Esophagus muscularis mucosa (tissue), 4 donors: ENCODE measurements at regions of chr14 and their contacts with region 1.

Region 1: GRCh38 chr14:77760381-77761246 is at the start of gene SNW1:
- DNase-seq: peak; percentile 97
- H3K4me3 ChIP-seq: peak within 1 kb of the TSS; percentile 84 to 97 (median 92)
- H3K27ac ChIP-seq: peak within 1 kb of the TSS; percentile 89 to 96 (median 94)
- H3K4me1 ChIP-seq: peaks cover 23 to 54% (median 48%) of the 10 kb centered on the region in 4 donors
- H3K27me3 ChIP-seq: no peaks in the 10 kb centered on the region
- CTCF ChIP-seq: no peak
- EP300 ChIP-seq: no peak
- POLR2A ChIP-seq: peak; percentile 56
- total RNA-seq, gene SNW1: 39.9 to 57.4 (median 51.0) TPM

Region 2: GRCh38 chr14:77799863-77800730 is 39.5 kb after region 1 on chr14 and contains the start of gene ADCK1:
- intact Hi-C with region 1: loop called (anchors 2 kb)
- DNase-seq: peak; percentile 97
- H3K4me3 ChIP-seq: peak within 1 kb of the TSS; percentile 88 to 97 (median 92)
- H3K27ac ChIP-seq: peak within 1 kb of the TSS; percentile 91 to 93 (median 92)
- H3K4me1 ChIP-seq: peaks cover 5 to 14% (median 12%) of the 10 kb centered on the region in 4 donors
- H3K27me3 ChIP-seq: no peaks in the 10 kb centered on the region
- CTCF ChIP-seq: peak; percentile 10 to 59 (median 22)
- EP300 ChIP-seq: no peak
- POLR2A ChIP-seq: peak; percentile 28
- total RNA-seq, gene ADCK1: 5.0 to 7.2 (median 5.7) TPM

Region 3: GRCh38 chr14:78029601-78030372 is 269.2 kb after region 1 on chr14:
- intact Hi-C with region 1: no loop called
- DNase-seq: no peak
- H3K4me3 ChIP-seq: no peak overlapping the region
- H3K27ac ChIP-seq: no peak overlapping the region
- H3K4me1 ChIP-seq: no peaks in the 10 kb centered on the region
- H3K27me3 ChIP-seq: peaks cover 0 to 32% (median 0%) of the 10 kb centered on the region in 4 donors
- CTCF ChIP-seq: no peak
- EP300 ChIP-seq: no peak
- POLR2A ChIP-seq: no peak